ENCODE measurements at regions of chr6 and their contacts with region 1.

Region 1: DNA sequence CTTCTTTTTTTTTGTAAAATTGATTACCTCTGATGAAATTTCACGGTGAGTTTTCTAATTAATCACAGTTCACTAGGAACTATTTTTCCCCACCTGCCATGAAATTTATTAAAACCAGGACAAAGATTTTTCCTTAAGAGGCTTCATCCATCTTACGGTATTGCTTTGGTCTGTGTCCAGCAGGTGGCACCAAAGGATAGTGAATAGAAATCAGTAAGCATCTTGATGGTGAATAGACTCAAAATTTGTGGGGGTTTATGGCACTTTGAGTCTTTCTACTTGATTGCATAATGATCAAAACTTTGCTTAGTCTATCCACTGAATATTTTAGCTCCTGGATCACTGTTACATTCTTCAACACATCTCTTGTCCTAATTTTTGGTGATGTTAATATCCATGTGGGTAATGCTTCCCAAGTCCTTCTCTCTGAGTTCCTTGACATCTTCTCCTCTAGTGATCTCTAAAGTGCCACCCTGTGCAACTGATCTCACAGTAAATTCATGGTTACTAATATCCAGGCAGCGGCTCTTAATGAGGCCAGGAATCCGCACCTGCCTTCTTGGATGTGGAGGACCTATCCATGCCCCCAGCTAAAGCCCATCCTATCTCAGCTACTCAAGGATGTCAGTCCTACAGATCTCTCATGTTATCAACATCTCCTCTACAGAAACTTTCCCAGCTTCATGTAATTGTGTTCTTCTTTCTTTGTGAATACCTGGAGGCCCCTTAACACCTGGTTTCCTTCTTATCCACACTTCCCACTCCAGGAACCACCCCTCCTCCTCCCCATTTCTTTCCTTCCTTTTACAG is 54.5 kb downstream of the STMND1 start:
- DNase-seq: peak; percentile 44 to 75 (median 52)
- H3K4me3 ChIP-seq: no peak overlapping the region
- H3K27ac ChIP-seq: no peak overlapping the region
- H3K4me1 ChIP-seq: no peaks in the 10 kb centered on the region
- H3K27me3 ChIP-seq: no peaks in the 10 kb centered on the region
- CTCF ChIP-seq: peak in 2 of 3 donors; percentile 70 to 71
- EP300 ChIP-seq: no peak
- POLR2A ChIP-seq: no peak

Region 2: DNA sequence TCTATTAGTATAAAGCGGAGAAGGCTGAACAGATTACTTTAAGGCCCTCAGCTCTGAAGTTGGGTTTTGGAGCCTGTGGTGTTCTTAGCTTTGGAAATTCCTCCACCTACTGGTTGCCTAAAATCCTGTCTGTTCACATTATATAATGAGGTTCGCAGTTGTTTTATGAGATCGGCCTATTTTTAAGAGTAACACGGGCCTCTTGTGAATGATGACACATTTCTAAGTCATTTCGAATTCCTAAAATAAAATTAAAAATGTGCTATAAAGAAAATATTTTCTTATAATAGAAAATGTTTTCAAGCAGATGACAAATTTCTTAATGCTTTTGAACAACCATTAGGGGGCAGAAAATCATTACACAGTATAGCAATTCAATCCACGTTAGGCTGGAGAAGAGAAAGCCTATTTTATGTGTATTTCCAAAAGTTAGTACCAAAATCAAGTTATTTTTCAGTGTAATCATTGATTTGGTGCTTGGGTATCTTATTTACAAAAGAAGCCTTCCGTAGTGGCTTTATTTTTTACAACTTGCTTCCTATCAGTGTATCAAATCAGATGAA is 428.0 kb after region 1 on chr6:
- intact Hi-C with region 1: loop called (anchors 1 to 10 kb)
- DNase-seq: peak in 2 of 5 donors; percentile 17 to 28
- H3K4me3 ChIP-seq: no peak overlapping the region
- H3K27ac ChIP-seq: peak overlapping the region in 1 of 2 donors; percentile 62
- H3K4me1 ChIP-seq: no peaks in the 10 kb centered on the region
- H3K27me3 ChIP-seq: no peaks in the 10 kb centered on the region
- CTCF ChIP-seq: peak; percentile 64 to 92 (median 85)
- EP300 ChIP-seq: no peak
- POLR2A ChIP-seq: no peak

Region 3: GRCh38 chr6:17808609-17809008 is 652.3 kb after region 1 on chr6:
- intact Hi-C with region 1: loop called in 3 of 4 experiments (anchors 10 kb)
- DNase-seq: no peak
- H3K4me3 ChIP-seq: no peak overlapping the region
- H3K27ac ChIP-seq: no peak overlapping the region
- H3K4me1 ChIP-seq: no peaks in the 10 kb centered on the region
- H3K27me3 ChIP-seq: no peaks in the 10 kb centered on the region
- CTCF ChIP-seq: no peak
- EP300 ChIP-seq: no peak
- POLR2A ChIP-seq: no peak

Region 4: GRCh38 chr6:18122124-18123093 is 966.1 kb after region 1 on chr6 and contains the start of gene NHLRC1:
- intact Hi-C with region 1: loop called in 1 of 4 experiments (anchors 10 kb)
- DNase-seq: peak; percentile 81 to 89 (median 84)
- H3K4me3 ChIP-seq: peak within 1 kb of the TSS; percentile 60
- H3K27ac ChIP-seq: no peak within 1 kb of the TSS
- H3K4me1 ChIP-seq: peaks cover 3% of the 10 kb centered on the region
- H3K27me3 ChIP-seq: no peaks in the 10 kb centered on the region
- CTCF ChIP-seq: peak; percentile 73 to 91 (median 86)
- EP300 ChIP-seq: no peak
- POLR2A ChIP-seq: peak; percentile 20
- total RNA-seq, gene NHLRC1: 0.46 to 1.7 (median 1.2) TPM

Region 5: GRCh38 chr6:18503593-18504231 is 1347.4 kb after region 1 on chr6:
- intact Hi-C with region 1: loop called in 1 of 4 experiments (anchors 10 kb)
- DNase-seq: peak in 3 of 5 donors; percentile 28 to 50 (median 30)
- H3K4me3 ChIP-seq: no peak overlapping the region
- H3K27ac ChIP-seq: no peak overlapping the region
- H3K4me1 ChIP-seq: no peaks in the 10 kb centered on the region
- H3K27me3 ChIP-seq: no peaks in the 10 kb centered on the region
- CTCF ChIP-seq: peak; percentile 37 to 55 (median 49)
- EP300 ChIP-seq: no peak
- POLR2A ChIP-seq: no peak